CD8-positive, alpha-beta T cell (primary cell): ENCODE measurements at regions of chr10 and their contacts with region 1.

Region 1: DNA sequence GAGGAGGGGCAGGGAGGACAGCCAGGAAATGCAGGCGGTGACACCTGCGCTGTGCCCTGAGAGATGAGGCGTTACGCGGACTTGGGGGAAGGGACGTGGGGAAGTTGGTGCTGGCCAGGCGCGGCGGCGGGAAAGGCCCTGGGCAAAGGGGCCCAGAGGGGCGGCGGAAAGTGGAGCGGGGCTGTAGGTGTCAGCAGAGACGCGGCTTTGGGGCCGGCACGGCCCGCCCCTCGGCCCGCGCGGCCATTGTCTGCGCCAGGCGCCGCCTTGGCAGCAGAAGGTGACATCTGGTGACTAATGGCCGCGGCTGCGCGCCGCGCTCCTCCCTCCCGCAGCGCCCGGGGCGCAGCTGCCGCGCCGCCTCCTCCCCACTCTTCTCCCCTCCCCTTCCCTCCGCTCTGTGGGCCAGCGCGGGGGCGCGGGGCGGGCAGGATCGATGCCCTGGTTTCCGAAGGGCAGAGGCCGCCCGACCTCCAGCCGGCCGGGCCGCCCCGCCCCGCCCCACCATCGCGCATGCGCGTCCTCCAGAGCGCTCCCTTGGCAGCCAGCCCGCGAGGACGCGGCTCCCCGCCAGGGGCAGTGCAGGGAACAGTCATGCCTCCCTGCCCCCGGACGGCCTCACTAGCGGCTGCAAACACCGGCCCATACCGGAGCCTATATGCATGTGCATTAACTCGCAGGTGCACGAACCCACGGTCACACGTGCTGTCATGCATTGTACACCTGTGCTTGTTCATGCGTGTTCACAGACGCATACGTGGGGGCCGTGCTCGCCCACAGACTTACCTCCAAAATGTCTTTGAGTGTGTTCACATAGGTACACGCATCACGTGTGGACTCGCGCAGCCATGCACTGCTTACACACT is 269.6 kb downstream of the RPS24 start:
- DNase-seq: peak; percentile 94 to 99 (median 96)
- ATAC-seq: peak; percentile 92
- H3K4me3 ChIP-seq: peak overlapping the region; percentile 73 to 82
- H3K4me3 Mint-ChIP-seq: peak overlapping the region; percentile 97
- H3K27ac ChIP-seq: peak overlapping the region; percentile 76 to 92
- H3K27ac Mint-ChIP-seq: peak overlapping the region; percentile 97
- H3K4me1 ChIP-seq: peaks cover 17% of the 10 kb centered on the region
- H3K4me1 Mint-ChIP-seq: peaks cover 20% of the 10 kb centered on the region
- H3K27me3 ChIP-seq: no peaks in the 10 kb centered on the region
- H3K27me3 Mint-ChIP-seq: no peaks in the 10 kb centered on the region
- CTCF ChIP-seq: peak; percentile 79

Region 2: DNA sequence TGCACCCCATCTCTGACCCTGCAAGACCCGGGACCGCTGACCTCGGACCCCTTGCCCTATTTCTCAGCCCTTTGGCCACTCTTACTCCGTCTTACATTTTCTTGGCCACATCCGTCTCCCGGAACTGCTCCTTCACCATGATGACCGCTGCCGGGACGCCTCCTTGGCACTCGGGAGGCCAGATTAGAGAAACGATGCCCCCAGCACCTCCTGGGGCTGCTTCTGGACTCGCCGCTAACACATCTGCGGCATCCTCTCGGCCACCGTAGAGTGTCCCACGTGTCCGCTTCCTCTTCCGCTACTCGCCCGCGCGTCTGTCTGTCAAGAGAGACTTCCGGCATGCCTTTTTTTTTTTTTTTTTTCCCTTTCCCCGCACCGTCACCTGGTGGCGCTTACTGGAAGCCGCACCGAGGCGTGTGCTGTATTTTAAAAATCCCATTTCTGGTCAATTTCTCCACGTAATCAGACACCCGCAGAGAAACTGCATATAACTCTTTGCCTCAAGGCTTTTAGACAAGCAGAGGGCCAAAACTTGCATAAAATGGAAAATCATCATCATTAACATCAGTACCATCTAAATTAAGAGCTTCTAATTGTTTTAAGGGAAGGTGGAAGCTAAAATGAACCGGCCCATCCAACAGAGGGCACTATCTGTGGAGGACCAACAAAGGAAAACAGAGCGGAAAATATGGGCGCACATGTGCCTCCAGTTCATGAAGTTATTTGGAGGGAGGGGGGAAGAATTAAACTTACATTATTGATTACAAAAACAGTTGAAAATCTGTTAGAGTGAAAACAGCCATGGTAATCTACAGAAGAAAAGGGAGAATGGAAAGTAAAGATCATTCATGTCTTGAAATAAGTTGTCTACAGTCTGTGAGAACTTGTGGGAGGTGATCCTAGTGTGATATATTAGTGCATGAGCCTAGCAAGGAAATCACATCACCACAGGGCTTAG is 273.7 kb before region 1 on chr10 and contains the start of gene POLR3A:
- CTCF ChIA-PET with region 1: no interaction called
- POLR2A ChIA-PET with region 1: interaction called, 4 read pairs
- intact Hi-C with region 1: loop called (anchors 1 kb)
- DNase-seq: peak; percentile 81 to 97 (median 90)
- ATAC-seq: peak; percentile 56
- H3K4me3 ChIP-seq: peak within 1 kb of the TSS; percentile 92 to 99
- H3K4me3 Mint-ChIP-seq: peak within 1 kb of the TSS; percentile 99
- H3K27ac ChIP-seq: peak within 1 kb of the TSS; percentile 55 to 70
- H3K27ac Mint-ChIP-seq: peak within 1 kb of the TSS; percentile 95
- H3K4me1 ChIP-seq: peaks cover 17% of the 10 kb centered on the region
- H3K4me1 Mint-ChIP-seq: peaks cover 40% of the 10 kb centered on the region
- H3K27me3 ChIP-seq: no peaks in the 10 kb centered on the region
- H3K27me3 Mint-ChIP-seq: no peaks in the 10 kb centered on the region
- CTCF ChIP-seq: peak; percentile 75
- total RNA-seq, gene POLR3A: 5.9 to 7.0 TPM

Region 3: DNA sequence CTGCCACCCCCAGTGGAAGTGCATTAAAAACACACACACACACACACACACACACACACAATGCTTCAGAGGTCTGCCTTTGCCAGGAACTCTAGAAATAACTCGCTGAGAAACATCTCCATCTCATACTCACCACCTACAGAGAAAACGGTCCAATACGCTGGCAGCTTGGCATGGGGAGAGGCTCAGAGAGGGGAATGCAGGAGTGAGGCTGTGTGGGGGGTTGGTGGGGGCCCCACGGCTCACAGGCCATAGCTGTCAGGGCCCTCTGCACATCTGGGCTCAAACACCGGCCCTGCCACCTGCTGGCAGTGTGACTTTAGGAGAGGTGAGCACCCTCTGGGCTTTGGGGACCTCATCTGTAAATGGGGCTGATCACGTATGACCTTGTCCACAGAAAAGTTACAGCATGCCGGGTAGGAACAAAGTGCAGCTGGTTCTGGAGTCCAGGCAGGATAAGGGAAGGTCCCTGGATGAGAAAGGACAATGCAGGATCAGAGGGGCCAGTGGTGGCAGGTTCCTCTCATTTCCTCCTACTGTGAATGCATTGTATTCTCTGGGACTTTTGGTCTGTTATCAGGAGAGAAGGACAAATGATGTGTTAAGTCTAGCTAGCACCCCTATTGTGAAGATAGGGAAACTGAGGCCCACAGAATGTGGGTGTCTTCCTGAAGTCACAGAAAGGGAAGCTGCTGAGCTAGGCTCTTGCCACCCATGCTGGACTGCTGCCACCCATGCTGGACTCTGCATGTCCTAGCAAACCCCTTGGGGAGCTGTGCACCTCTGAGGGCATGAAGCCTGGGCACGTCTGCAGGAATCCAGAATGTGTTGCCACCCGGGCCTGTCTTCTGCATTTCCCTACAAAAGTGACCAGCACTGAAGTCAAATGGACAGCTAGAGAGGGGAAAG is 135.0 kb after region 1 on chr10:
- CTCF ChIA-PET with region 1: no interaction called
- POLR2A ChIA-PET with region 1: no interaction called
- intact Hi-C with region 1: loop called in 1 of 2 experiments (anchors 5 kb)
- DNase-seq: peak in 2 of 9 experiments; percentile 14 to 27
- ATAC-seq: no peak
- H3K4me3 ChIP-seq: no peak overlapping the region
- H3K4me3 Mint-ChIP-seq: no peak overlapping the region
- H3K27ac ChIP-seq: no peak overlapping the region
- H3K27ac Mint-ChIP-seq: no peak overlapping the region
- H3K4me1 ChIP-seq: no peaks in the 10 kb centered on the region
- H3K4me1 Mint-ChIP-seq: no peaks in the 10 kb centered on the region
- H3K27me3 ChIP-seq: no peaks in the 10 kb centered on the region
- H3K27me3 Mint-ChIP-seq: peaks cover 2% of the 10 kb centered on the region
- CTCF ChIP-seq: no peak

Region 4: DNA sequence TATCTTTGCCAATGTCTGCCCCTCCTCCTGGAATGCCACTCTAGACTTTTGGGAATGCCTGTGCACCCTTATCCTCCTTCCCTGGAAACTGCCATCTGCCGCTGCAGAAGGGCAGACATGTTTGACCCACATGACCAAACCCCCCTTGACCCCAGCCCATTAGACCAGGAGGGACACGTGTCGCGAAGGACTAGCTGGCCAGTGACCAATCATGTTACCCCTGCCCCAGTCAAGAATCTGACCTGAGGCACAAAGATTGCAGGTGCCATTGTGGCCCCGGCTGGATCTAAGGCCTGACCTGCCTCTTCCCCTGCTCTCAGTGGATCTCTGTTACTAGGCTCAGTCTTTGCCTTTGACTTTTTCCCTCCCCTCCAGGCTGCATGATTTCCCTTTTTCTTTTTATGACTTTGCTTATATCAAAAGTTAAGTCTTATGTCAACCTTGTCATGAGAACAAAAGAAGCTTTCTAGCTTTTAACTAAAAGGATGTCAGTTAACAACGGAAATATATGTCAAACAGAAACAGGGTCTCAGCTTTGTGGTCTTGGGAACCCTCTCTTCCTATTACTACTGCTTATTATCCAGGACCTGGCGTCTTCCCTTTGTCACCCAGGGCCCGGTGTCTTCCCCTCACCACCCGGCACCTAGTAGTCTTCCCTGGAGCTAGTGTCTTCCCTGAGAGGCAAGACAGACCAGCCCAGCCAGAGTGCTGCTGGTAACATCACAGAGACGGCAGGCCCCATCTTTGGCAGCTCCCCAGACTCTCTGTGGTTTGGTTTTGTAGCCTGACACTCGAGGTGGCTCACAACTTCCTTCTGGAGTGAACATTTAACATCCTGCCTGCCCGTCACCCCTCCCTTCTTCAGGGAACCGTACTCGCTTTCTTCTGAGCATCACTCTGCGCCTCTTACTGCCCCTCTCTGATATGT is 1019.7 kb after region 1 on chr10:
- CTCF ChIA-PET with region 1: no interaction called
- POLR2A ChIA-PET with region 1: no interaction called
- intact Hi-C with region 1: loop called in 1 of 2 experiments (anchors 5 kb)
- DNase-seq: peak; percentile 60 to 93 (median 89)
- ATAC-seq: peak; percentile 89
- H3K4me3 ChIP-seq: peak overlapping the region; percentile 4 to 16
- H3K4me3 Mint-ChIP-seq: peak overlapping the region; percentile 77
- H3K27ac ChIP-seq: peak overlapping the region; percentile 51 to 70
- H3K27ac Mint-ChIP-seq: peak overlapping the region; percentile 95
- H3K4me1 ChIP-seq: peaks cover 68% of the 10 kb centered on the region
- H3K4me1 Mint-ChIP-seq: peaks cover 65% of the 10 kb centered on the region
- H3K27me3 ChIP-seq: no peaks in the 10 kb centered on the region
- H3K27me3 Mint-ChIP-seq: no peaks in the 10 kb centered on the region
- CTCF ChIP-seq: no peak